ENCODE measurements at regions of chr2 and their contacts with region 1.

Region 1: GRCh38 chr2:38394903-38395341 is 17.8 kb upstream of the ATL2 start:
- DNase-seq: peak; percentile 37 to 96
- H3K4me3 ChIP-seq: no peak overlapping the region; the same call in 1 of the 2 replicates
- H3K27ac ChIP-seq: peak overlapping the region; percentile 81
- H3K4me1 ChIP-seq: peaks cover 33% of the 10 kb centered on the region
- H3K27me3 ChIP-seq: no peaks in the 10 kb centered on the region
- CTCF ChIP-seq: no peak

Region 2: DNA sequence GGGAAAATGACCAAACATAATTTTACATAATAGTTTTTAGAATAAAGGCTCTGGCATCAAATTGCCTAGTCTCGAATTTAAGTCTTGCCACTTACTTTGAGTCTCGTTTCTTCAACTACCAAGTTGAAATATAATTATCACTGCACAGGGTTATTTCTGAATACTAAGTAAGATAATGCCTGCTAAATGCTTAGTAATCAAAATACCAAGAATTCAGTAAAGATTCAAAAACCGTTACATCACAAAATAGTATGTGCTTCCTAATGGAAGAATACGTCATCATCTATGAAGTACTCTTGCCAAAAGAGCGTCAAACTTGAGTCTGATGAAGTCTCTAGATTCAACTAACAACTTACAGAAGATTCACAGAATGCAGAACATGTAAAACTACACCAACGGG is 58.3 kb before region 1 on chr2:
- CTCF ChIA-PET with region 1: no interaction called
- POLR2A ChIA-PET with region 1: no interaction called
- intact Hi-C with region 1: no loop called
- DNase-seq: no peak
- H3K4me3 ChIP-seq: no peak overlapping the region
- H3K27ac ChIP-seq: no peak overlapping the region
- H3K4me1 ChIP-seq: no peaks in the 10 kb centered on the region
- H3K27me3 ChIP-seq: no peaks in the 10 kb centered on the region
- CTCF ChIP-seq: no peak

Region 3: DNA sequence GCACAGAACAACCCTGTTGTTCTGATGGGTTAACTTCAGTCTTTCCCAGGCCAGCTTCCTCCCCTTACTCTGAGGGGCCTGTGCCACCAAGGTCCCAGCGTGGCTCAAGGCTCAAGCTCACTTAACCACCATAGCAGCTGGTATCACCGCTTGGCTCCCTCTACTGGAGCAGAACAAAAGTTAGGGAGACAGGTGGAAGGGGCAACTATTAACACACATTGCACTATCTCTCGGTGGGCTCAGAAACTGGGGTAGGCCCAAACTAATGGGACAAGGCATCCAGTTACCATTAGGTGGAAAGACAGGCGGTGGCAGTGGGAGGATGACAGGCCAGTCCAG is 70.8 kb after region 1 on chr2:
- CTCF ChIA-PET with region 1: interaction called, 5 read pairs
- POLR2A ChIA-PET with region 1: interaction called, 7 read pairs
- intact Hi-C with region 1: loop called (anchors 1 kb)
- DNase-seq: peak in 1 of 2 experiments; percentile 32
- H3K4me3 ChIP-seq: no peak overlapping the region
- H3K27ac ChIP-seq: no peak overlapping the region
- H3K4me1 ChIP-seq: peaks cover 28% of the 10 kb centered on the region
- H3K27me3 ChIP-seq: no peaks in the 10 kb centered on the region
- CTCF ChIP-seq: peak; percentile 79

Region 4: DNA sequence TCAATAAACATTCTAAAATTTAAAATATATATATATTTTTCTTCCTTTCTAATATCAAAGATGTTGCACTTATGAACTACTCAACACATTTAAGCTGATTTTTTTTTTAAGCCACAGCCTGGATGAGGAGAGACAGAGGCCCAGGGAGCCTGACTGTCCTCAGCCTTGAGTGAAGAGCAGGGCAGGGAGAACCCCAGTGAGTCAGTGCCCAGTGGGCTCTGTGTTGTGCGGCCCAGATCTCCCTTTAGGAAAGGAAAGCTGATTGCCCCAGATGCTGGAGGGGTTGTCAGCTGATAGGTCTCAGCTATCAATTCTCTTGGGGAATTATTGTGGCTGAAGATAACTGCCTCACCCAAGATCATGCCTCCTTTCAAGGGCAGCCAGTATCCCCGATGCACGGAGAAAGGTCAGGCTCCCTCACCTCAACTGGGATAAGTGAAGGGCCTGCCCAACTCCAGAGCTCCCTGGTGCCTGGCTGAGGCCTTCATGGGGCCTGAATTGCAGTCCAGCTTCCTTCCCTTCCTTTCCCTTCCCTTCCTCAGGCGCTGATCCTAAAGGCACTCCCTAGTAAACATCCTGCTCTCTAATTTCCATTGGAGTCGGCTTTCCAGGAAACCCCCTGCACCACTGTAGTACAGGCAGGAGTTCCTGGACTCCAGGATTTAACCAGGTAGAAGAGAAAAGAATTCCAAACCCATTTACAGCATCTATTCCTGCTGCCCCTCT is 89.0 kb after region 1 on chr2:
- CTCF ChIA-PET with region 1: no interaction called
- POLR2A ChIA-PET with region 1: no interaction called
- intact Hi-C with region 1: no loop called
- DNase-seq: no peak
- H3K4me3 ChIP-seq: no peak overlapping the region
- H3K27ac ChIP-seq: no peak overlapping the region
- H3K4me1 ChIP-seq: no peaks in the 10 kb centered on the region
- H3K27me3 ChIP-seq: no peaks in the 10 kb centered on the region
- CTCF ChIP-seq: no peak

Region 5: GRCh38 chr2:38571193-38571592 is 176.3 kb after region 1 on chr2:
- CTCF ChIA-PET with region 1: no interaction called
- POLR2A ChIA-PET with region 1: no interaction called
- intact Hi-C with region 1: no loop called
- DNase-seq: no peak
- H3K4me3 ChIP-seq: no peak overlapping the region
- H3K27ac ChIP-seq: no peak overlapping the region
- H3K4me1 ChIP-seq: no peaks in the 10 kb centered on the region
- H3K27me3 ChIP-seq: no peaks in the 10 kb centered on the region
- CTCF ChIP-seq: no peak